Activated B cell treated with CpG ODN at 0.5 μM for 24 hours (primary cell): ENCODE measurements at regions of chr4 and their contacts with region 1.

Region 1: GRCh38 chr4:145823743-145824142 is 114.9 kb downstream of the ZNF827 start:
- DNase-seq: no peak
- ATAC-seq: no peak
- H3K4me3 Mint-ChIP-seq: no peak overlapping the region
- H3K27ac Mint-ChIP-seq: no peak overlapping the region
- H3K4me1 Mint-ChIP-seq: peaks cover 5% of the 10 kb centered on the region
- H3K27me3 Mint-ChIP-seq: no peaks in the 10 kb centered on the region
- CTCF ChIP-seq: no peak

Region 2: DNA sequence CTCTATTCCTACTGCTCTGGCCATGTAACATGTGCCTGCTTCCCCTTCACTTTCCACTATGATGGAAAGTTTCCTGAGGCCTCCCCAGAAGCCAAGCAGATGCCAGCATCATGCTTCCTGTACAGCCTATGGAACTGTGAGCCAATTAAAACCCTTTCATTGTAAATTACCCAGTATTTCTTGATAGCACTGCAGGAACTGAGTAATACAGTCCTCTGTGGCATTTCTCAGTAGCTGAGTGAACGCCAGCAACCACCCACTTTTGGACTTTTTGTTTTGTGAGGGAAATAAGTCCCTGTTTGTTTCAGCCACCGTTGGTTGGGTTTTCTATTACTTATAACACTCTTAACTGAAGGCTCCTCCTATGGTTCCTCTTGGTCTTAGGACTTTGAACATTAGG is 39.7 kb before region 1 on chr4:
- CTCF ChIA-PET with region 1: no interaction called
- POLR2A ChIA-PET with region 1: no interaction called
- intact Hi-C with region 1: loop called (anchors 1 kb)
- DNase-seq: no peak
- ATAC-seq: no peak
- H3K4me3 Mint-ChIP-seq: no peak overlapping the region
- H3K27ac Mint-ChIP-seq: no peak overlapping the region
- H3K4me1 Mint-ChIP-seq: no peaks in the 10 kb centered on the region
- H3K27me3 Mint-ChIP-seq: no peaks in the 10 kb centered on the region
- CTCF ChIP-seq: no peak